CD4-positive, alpha-beta T cell (primary cell): ENCODE measurements at regions of chrX and their contacts with region 1.

Region 1: DNA sequence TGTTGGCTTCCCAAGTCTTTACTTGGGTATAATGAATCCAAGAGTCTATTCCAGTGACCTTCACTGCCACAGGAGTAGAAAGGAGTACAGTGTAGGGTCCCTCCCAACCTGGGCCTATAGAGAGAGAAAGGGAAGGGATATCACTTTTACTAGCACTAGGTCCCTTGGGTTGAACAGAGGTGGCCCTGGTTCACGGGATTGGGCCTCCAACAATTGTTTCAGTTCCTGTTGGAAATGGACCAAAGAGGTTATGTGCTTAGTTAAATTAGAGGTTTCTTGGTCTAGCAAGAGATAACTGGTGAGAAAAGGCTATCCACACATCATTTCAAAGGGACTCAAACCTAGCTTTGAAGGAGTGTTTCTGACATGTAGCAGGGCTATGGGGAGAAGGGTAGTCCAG is 57.1 kb upstream of the MED14 start:
- DNase-seq: no peak
- ATAC-seq: no peak
- H3K4me3 ChIP-seq: no peak overlapping the region
- H3K4me3 Mint-ChIP-seq: no peak overlapping the region
- H3K27ac ChIP-seq: no peak overlapping the region
- H3K27ac Mint-ChIP-seq: no peak overlapping the region
- H3K4me1 ChIP-seq: peaks cover 5% of the 10 kb centered on the region
- H3K4me1 Mint-ChIP-seq: peaks cover 5% of the 10 kb centered on the region
- H3K27me3 ChIP-seq: no peaks in the 10 kb centered on the region
- H3K27me3 Mint-ChIP-seq: no peaks in the 10 kb centered on the region
- CTCF ChIP-seq: no peak

Region 2: GRCh38 chrX:40539214-40540142 is 253.0 kb before region 1 on chrX:
- CTCF ChIA-PET with region 1: interaction called, 4 read pairs
- POLR2A ChIA-PET with region 1: no interaction called
- intact Hi-C with region 1: loop called (anchors 1 to 2 kb)
- DNase-seq: peak; percentile 58 to 82 (median 68)
- ATAC-seq: peak; percentile 95
- H3K4me3 ChIP-seq: no peak overlapping the region
- H3K4me3 Mint-ChIP-seq: peak overlapping the region; percentile 4
- H3K27ac ChIP-seq: no peak overlapping the region
- H3K27ac Mint-ChIP-seq: peak overlapping the region; percentile 69
- H3K4me1 ChIP-seq: peaks cover 15% of the 10 kb centered on the region
- H3K4me1 Mint-ChIP-seq: peaks cover 25% of the 10 kb centered on the region
- H3K27me3 ChIP-seq: no peaks in the 10 kb centered on the region
- H3K27me3 Mint-ChIP-seq: no peaks in the 10 kb centered on the region
- CTCF ChIP-seq: peak; percentile 49

Region 3: DNA sequence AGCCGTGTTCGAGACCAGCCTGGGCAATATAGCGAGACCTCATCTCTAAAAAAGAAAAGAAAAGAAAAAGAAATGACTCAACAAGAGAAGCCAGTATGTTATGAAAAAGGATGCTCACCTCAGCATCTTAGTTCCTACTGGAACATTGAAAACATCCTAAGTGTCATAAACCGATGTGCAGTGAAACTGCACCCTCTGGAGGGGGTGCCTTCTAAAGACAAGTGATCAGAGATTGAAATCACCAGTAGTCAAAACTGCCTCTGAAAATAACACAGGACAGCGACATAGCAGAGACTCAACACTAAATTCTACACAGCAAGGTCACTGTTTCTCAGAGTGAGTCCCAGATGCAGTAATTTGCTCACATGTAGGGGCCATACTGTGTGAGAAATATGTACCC is 239.7 kb before region 1 on chrX:
- CTCF ChIA-PET with region 1: no interaction called
- POLR2A ChIA-PET with region 1: no interaction called
- intact Hi-C with region 1: no loop called
- DNase-seq: no peak
- ATAC-seq: no peak
- H3K4me3 ChIP-seq: no peak overlapping the region
- H3K4me3 Mint-ChIP-seq: no peak overlapping the region
- H3K27ac ChIP-seq: no peak overlapping the region
- H3K27ac Mint-ChIP-seq: no peak overlapping the region
- H3K4me1 ChIP-seq: no peaks in the 10 kb centered on the region
- H3K4me1 Mint-ChIP-seq: no peaks in the 10 kb centered on the region
- H3K27me3 ChIP-seq: no peaks in the 10 kb centered on the region
- H3K27me3 Mint-ChIP-seq: no peaks in the 10 kb centered on the region
- CTCF ChIP-seq: no peak

Region 4: DNA sequence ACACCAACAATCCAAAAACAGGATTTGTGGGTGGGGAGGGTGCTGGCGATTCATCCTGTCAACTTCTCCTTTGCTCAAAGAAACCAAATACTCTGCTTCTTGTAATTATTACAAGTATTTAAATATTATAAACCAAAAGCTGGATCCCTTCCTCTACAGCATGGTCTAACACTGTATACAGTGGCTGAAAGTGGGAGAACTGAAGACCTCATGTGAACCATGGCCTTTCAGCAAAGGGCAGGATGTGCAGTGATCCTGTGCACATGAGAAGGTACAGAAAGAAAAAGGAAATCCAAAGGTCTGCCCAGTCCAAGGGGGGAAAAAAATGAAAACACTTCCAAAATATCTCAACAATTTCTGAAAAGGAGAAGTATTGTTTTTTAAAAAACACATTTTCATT is 139.8 kb before region 1 on chrX:
- CTCF ChIA-PET with region 1: interaction called, 18 read pairs
- POLR2A ChIA-PET with region 1: interaction called, 3 read pairs
- intact Hi-C with region 1: loop called (anchors 1 kb)
- DNase-seq: no peak
- ATAC-seq: no peak
- H3K4me3 ChIP-seq: no peak overlapping the region
- H3K4me3 Mint-ChIP-seq: no peak overlapping the region
- H3K27ac ChIP-seq: no peak overlapping the region
- H3K27ac Mint-ChIP-seq: no peak overlapping the region
- H3K4me1 ChIP-seq: peaks cover 5% of the 10 kb centered on the region
- H3K4me1 Mint-ChIP-seq: peaks cover 9% of the 10 kb centered on the region
- H3K27me3 ChIP-seq: no peaks in the 10 kb centered on the region
- H3K27me3 Mint-ChIP-seq: no peaks in the 10 kb centered on the region
- CTCF ChIP-seq: no peak